CD8-positive, alpha-beta memory T cell (primary cell): ENCODE measurements at regions of chr19 and their contacts with region 1.

Region 1: DNA sequence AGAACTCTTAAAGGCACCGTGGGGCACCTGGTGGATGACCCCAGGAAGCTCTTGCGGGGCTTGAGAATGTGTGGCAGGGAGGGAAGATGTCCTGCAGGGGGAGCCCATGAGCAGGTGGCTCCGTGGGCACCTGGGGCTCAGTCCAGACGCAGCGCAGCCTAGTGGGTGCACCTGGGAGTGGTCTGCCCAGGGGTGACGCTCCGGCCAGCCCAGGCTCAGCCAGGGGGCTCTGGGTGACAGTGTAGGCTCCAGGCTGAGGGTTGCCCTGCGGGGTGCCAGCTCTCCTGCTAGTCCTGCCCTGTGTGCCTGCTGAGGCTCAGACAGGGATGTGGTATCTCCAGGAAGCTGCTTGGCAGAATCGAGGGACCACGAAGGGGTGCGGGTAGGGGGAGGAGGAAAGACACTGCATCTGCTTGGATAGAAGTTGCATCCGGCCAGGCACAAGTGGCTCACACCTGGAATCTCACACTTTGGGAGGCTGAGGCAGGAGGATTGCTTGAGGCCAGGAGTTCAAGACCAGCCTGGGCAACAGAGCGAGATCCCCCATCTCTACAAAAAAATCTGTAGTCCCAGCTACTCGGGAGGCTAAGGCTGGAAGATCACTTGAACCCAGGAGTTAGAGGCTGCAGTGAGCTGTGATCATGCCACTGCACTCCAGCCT is 15.0 kb upstream of the PGLS start:
- DNase-seq: peak; percentile 66 to 83 (median 73)
- H3K4me3 ChIP-seq: no peak overlapping the region
- H3K4me3 Mint-ChIP-seq: no peak overlapping the region
- H3K27ac ChIP-seq: no peak overlapping the region
- H3K27ac Mint-ChIP-seq: peak overlapping the region in 2 of 8 donors; percentile 79 to 84
- H3K4me1 ChIP-seq: peaks cover 14% of the 10 kb centered on the region
- H3K4me1 Mint-ChIP-seq: peaks cover 17 to 19% (median 18%) of the 10 kb centered on the region in 3 donors
- H3K27me3 ChIP-seq: no peaks in the 10 kb centered on the region
- H3K27me3 Mint-ChIP-seq: peaks cover 0 to 2% of the 10 kb centered on the region in 2 donors

Region 2: DNA sequence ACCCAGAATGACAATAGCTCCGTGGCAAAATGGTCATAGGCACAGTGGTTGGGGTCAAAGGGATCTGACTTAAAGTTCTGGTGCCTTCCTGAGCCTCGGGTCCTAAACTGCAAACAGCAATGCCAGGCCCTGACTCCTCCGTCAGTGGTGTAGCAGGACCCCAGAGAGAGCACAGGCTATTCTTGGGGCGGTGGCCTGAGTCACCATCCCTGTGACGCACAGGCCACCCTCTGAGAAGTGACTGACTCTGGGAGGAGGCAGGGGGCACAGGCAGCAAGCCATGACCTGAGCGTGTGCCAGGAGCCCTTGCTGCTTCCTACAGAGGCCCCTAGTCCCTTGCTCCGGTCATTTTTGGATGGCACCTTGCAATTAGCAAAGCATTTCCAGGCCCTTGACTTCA is 138.1 kb before region 1 on chr19:
- CTCF ChIA-PET with region 1: no interaction called
- POLR2A ChIA-PET with region 1: no interaction called
- DNase-seq: no peak
- H3K4me3 ChIP-seq: no peak overlapping the region
- H3K4me3 Mint-ChIP-seq: no peak overlapping the region
- H3K27ac ChIP-seq: no peak overlapping the region
- H3K27ac Mint-ChIP-seq: no peak overlapping the region
- H3K4me1 ChIP-seq: no peaks in the 10 kb centered on the region
- H3K4me1 Mint-ChIP-seq: no peaks in the 10 kb centered on the region
- H3K27me3 ChIP-seq: no peaks in the 10 kb centered on the region
- H3K27me3 Mint-ChIP-seq: peaks cover 2 to 4% of the 10 kb centered on the region in 2 donors

Region 3: GRCh38 chr19:17470068-17470841 is 26.2 kb before region 1 on chr19 and contains the start of gene SLC27A1:
- CTCF ChIA-PET with region 1: interaction called, 11 read pairs
- POLR2A ChIA-PET with region 1: no interaction called
- DNase-seq: peak; percentile 88 to 93 (median 91)
- H3K4me3 ChIP-seq: peak within 1 kb of the TSS; percentile 97
- H3K4me3 Mint-ChIP-seq: peak within 1 kb of the TSS; percentile 89 to 98 (median 94)
- H3K27ac ChIP-seq: peak within 1 kb of the TSS; percentile 58
- H3K27ac Mint-ChIP-seq: peak within 1 kb of the TSS; percentile 85 to 99 (median 92)
- H3K4me1 ChIP-seq: peaks cover 23% of the 10 kb centered on the region
- H3K4me1 Mint-ChIP-seq: peaks cover 21 to 32% (median 24%) of the 10 kb centered on the region in 3 donors
- H3K27me3 ChIP-seq: no peaks in the 10 kb centered on the region
- H3K27me3 Mint-ChIP-seq: no peaks in the 10 kb centered on the region
- total RNA-seq, gene SLC27A1: 2.0 to 3.7 TPM

Region 4: GRCh38 chr19:17511724-17512573 is 15.5 kb after region 1 on chr19:
- CTCF ChIA-PET with region 1: interaction called, 28 read pairs
- POLR2A ChIA-PET with region 1: interaction called, 3 read pairs
- DNase-seq: peak; percentile 81 to 94 (median 89)
- H3K4me3 ChIP-seq: peak overlapping the region; percentile 87
- H3K4me3 Mint-ChIP-seq: peak overlapping the region; percentile 88 to 100 (median 96)
- H3K27ac ChIP-seq: peak overlapping the region; percentile 83
- H3K27ac Mint-ChIP-seq: peak overlapping the region; percentile 53 to 98 (median 92)
- H3K4me1 ChIP-seq: peaks cover 21% of the 10 kb centered on the region
- H3K4me1 Mint-ChIP-seq: peaks cover 30 to 50% (median 35%) of the 10 kb centered on the region in 3 donors
- H3K27me3 ChIP-seq: no peaks in the 10 kb centered on the region
- H3K27me3 Mint-ChIP-seq: no peaks in the 10 kb centered on the region

Region 5: GRCh38 chr19:17522988-17523872 is 26.8 kb after region 1 on chr19:
- CTCF ChIA-PET with region 1: interaction called, 12 read pairs
- POLR2A ChIA-PET with region 1: no interaction called
- DNase-seq: peak in 4 of 5 donors; percentile 18 to 64 (median 50)
- H3K4me3 ChIP-seq: peak overlapping the region; percentile 17
- H3K4me3 Mint-ChIP-seq: peak overlapping the region; percentile 15 to 91 (median 79)
- H3K27ac ChIP-seq: no peak overlapping the region
- H3K27ac Mint-ChIP-seq: peak overlapping the region; percentile 81 to 98 (median 88)
- H3K4me1 ChIP-seq: peaks cover 19% of the 10 kb centered on the region
- H3K4me1 Mint-ChIP-seq: peaks cover 24 to 31% (median 28%) of the 10 kb centered on the region in 3 donors
- H3K27me3 ChIP-seq: no peaks in the 10 kb centered on the region
- H3K27me3 Mint-ChIP-seq: no peaks in the 10 kb centered on the region

Region 6: DNA sequence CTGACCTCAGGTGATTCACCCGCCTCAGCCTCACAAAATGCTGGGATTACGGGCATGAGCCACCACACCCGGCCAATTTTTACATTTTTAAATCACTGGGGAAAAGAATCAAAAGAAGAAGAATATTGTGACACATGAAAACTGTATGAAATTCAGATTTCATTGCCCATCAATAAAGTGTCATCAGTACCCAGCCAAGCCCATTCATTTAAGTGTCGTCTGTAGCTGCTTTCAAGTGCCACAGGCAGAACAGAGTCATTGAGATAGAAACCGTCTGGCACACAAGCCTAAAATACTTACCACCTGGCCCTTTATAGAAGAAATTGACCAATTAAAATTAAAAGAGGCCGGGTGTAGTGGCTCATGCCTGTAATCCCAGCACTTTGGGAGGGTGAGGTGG is 74.3 kb after region 1 on chr19:
- CTCF ChIA-PET with region 1: interaction called, 30 read pairs
- POLR2A ChIA-PET with region 1: interaction called, 4 read pairs
- DNase-seq: no peak
- H3K4me3 ChIP-seq: no peak overlapping the region
- H3K4me3 Mint-ChIP-seq: no peak overlapping the region
- H3K27ac ChIP-seq: no peak overlapping the region
- H3K27ac Mint-ChIP-seq: no peak overlapping the region
- H3K4me1 ChIP-seq: no peaks in the 10 kb centered on the region
- H3K4me1 Mint-ChIP-seq: peaks cover 2 to 4% (median 3%) of the 10 kb centered on the region in 3 donors
- H3K27me3 ChIP-seq: no peaks in the 10 kb centered on the region
- H3K27me3 Mint-ChIP-seq: no peaks in the 10 kb centered on the region

Region 7: GRCh38 chr19:17575871-17576758 is 79.6 kb after region 1 on chr19:
- CTCF ChIA-PET with region 1: interaction called, 30 read pairs
- POLR2A ChIA-PET with region 1: interaction called, 4 read pairs
- DNase-seq: no peak
- H3K4me3 ChIP-seq: no peak overlapping the region
- H3K4me3 Mint-ChIP-seq: peak overlapping the region in 1 of 7 donors; percentile 32
- H3K27ac ChIP-seq: no peak overlapping the region
- H3K27ac Mint-ChIP-seq: no peak overlapping the region
- H3K4me1 ChIP-seq: no peaks in the 10 kb centered on the region
- H3K4me1 Mint-ChIP-seq: peaks cover 2 to 4% (median 3%) of the 10 kb centered on the region in 3 donors
- H3K27me3 ChIP-seq: no peaks in the 10 kb centered on the region
- H3K27me3 Mint-ChIP-seq: no peaks in the 10 kb centered on the region